Mammary epithelial cell (primary cell): ENCODE measurements at regions of chr16 and their contacts with region 1.

Region 1: GRCh38 chr16:27867122-27868110 is 196.1 kb downstream of the GSG1L start:
- DNase-seq: peak; percentile 68
- H3K4me3 ChIP-seq: no peak overlapping the region
- H3K27ac ChIP-seq: no peak overlapping the region
- H3K4me1 ChIP-seq: no peaks in the 10 kb centered on the region
- H3K27me3 ChIP-seq: no peaks in the 10 kb centered on the region
- CTCF ChIP-seq: peak; percentile 26 to 59

Region 2: DNA sequence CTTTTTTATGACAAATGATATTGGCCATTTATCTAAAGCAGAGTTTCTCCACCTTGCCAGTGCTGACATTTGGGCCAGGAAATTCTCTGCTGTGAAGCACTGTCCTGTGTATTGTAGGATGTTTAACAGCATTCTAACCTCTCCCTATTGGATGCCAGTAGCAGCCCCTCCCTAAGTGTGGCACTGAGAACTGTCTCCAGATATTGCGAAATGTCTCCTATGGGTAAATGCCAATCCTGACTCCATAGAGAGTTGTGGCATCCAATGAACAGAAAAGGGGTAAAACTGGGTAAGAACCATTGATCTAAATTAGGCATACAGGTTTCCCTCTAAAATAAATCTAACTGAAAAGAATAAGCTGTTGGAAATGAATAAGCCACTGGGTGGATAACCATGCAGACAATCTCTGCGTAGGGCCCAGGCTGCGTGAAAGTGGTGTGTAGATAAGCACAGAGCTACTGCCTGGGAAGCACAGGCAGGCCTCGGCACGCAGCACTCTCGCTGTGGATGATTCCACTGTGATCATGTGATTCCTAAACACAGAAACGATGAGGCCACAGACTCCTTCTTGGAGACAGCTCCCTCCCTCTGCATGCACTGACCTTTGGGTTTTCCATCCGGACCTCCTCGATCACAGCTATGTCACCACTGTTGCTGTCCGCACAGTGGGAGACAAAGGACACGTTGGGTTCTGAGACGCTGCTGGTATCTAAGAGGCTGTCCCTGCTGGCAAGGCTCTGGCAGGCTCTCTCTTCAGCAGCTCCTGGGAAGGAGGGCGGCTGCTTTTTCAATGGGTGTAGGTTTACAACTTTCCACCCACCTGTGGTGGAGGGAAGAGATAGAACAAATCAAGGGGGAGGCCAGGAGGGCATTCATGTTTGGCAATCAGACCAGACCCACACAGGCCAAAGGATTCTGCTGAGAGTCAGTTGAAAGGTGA is 361.8 kb before region 1 on chr16:
- CTCF ChIA-PET with region 1: no interaction called
- dilution Hi-C with region 1: no loop called
- in situ Hi-C with region 1: no loop called
- intact Hi-C with region 1: loop called (anchors 2 kb)
- DNase-seq: peak; percentile 80
- H3K4me3 ChIP-seq: no peak overlapping the region
- H3K27ac ChIP-seq: peak overlapping the region; percentile 27
- H3K4me1 ChIP-seq: peaks cover 22% of the 10 kb centered on the region
- H3K27me3 ChIP-seq: no peaks in the 10 kb centered on the region
- CTCF ChIP-seq: no peak

Region 3: GRCh38 chr16:27625050-27625697 is 242.2 kb before region 1 on chr16:
- CTCF ChIA-PET with region 1: no interaction called
- dilution Hi-C with region 1: no loop called
- in situ Hi-C with region 1: no loop called
- intact Hi-C with region 1: no loop called
- DNase-seq: no peak
- H3K4me3 ChIP-seq: no peak overlapping the region
- H3K27ac ChIP-seq: no peak overlapping the region
- H3K4me1 ChIP-seq: no peaks in the 10 kb centered on the region
- H3K27me3 ChIP-seq: no peaks in the 10 kb centered on the region
- CTCF ChIP-seq: no peak

Region 4: GRCh38 chr16:27639561-27640276 is 227.7 kb before region 1 on chr16:
- CTCF ChIA-PET with region 1: no interaction called
- dilution Hi-C with region 1: no loop called
- in situ Hi-C with region 1: no loop called
- intact Hi-C with region 1: loop called (anchors 2 kb)
- DNase-seq: peak; percentile 41
- H3K4me3 ChIP-seq: no peak overlapping the region
- H3K27ac ChIP-seq: no peak overlapping the region
- H3K4me1 ChIP-seq: peaks cover 7% of the 10 kb centered on the region
- H3K27me3 ChIP-seq: no peaks in the 10 kb centered on the region
- CTCF ChIP-seq: peak; percentile 58 to 81

Region 5: DNA sequence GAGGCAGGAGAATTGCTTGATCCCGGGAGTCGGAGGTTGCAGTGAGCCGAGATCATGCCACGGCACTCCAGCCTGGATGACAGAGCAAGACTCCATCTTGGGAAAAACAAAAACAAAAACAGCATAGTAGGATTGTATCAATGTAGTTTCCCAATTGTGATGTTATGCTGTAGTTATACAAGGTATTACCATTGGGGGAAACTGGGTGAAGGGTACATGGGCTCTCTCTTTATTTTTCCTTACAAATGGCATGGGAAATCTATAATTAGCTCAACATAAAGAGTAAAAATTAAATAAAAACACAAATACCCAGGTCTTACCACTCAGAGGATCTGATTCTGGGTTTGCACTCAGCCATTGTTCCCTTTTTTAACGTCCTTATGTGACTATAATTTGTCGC is 209.6 kb before region 1 on chr16:
- CTCF ChIA-PET with region 1: interaction called, 15 read pairs
- dilution Hi-C with region 1: no loop called
- in situ Hi-C with region 1: no loop called
- intact Hi-C with region 1: no loop called
- DNase-seq: no peak
- H3K4me3 ChIP-seq: no peak overlapping the region
- H3K27ac ChIP-seq: no peak overlapping the region
- H3K4me1 ChIP-seq: no peaks in the 10 kb centered on the region
- H3K27me3 ChIP-seq: no peaks in the 10 kb centered on the region
- CTCF ChIP-seq: no peak

Region 6: GRCh38 chr16:27690608-27691007 is 176.8 kb before region 1 on chr16:
- CTCF ChIA-PET with region 1: no interaction called
- dilution Hi-C with region 1: no loop called
- in situ Hi-C with region 1: no loop called
- intact Hi-C with region 1: loop called (anchors 1 kb)
- DNase-seq: no peak
- H3K4me3 ChIP-seq: no peak overlapping the region
- H3K27ac ChIP-seq: no peak overlapping the region
- H3K4me1 ChIP-seq: no peaks in the 10 kb centered on the region
- H3K27me3 ChIP-seq: no peaks in the 10 kb centered on the region
- CTCF ChIP-seq: peak; percentile 30 to 45

Region 7: DNA sequence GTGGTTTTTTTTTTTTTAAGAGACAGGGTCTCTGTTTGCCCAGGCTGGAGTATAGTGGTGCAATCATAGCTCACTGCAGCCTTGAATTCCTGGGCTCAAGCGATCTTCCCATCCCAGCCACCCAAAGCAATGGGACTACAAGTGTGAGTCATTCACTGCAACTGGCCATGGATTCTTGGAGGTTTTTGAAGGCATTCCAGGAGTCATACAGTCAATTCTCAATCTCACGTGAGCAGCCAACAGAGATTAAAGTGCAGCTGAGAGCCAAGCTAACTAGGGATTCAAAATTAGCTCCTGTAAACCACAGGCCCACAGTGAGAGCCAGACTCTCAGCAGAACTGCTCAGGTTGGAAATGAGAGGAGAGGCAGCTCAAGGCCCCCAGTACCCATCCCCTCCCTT is 314.1 kb after region 1 on chr16:
- CTCF ChIA-PET with region 1: no interaction called
- dilution Hi-C with region 1: no loop called
- in situ Hi-C with region 1: no loop called
- intact Hi-C with region 1: no loop called
- DNase-seq: peak; percentile 84
- H3K4me3 ChIP-seq: no peak overlapping the region
- H3K27ac ChIP-seq: peak overlapping the region; percentile 10
- H3K4me1 ChIP-seq: peaks cover 17% of the 10 kb centered on the region
- H3K27me3 ChIP-seq: no peaks in the 10 kb centered on the region
- CTCF ChIP-seq: no peak